GM12878 (cell line): ENCODE measurements at regions of chr6 and their contacts with region 1.

Region 1: DNA sequence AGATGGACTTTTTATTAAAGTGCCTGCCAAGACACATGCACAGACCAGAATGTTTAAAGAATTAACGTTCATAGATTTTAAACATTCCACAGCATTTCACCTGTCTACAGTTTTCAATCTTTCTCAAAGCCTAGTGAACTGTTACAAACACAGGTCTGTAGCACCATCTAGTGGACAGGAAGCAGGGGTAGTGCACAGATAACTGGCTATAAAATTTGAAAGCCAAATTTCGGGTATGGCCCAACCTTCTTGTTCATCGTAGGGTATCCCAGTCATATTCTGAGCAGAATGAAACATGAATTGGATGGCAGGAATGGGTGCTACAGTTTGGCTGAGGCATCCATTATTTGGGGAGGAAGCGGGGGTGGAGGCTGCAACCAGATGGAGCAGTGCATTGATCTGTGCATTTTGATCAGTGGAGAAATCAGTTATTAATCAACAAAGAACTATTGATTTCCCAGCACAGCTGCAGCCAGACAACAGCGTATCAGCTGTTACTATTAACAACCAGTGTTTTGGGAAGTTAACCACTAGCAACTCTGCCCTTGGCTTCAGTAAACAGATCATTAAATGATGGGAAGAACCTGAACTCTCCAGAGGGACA is 56.1 kb upstream of the B3GAT2 start:
- DNase-seq: peak; percentile 12
- ATAC-seq: peak; percentile 97
- H3K4me3 ChIP-seq: no peak overlapping the region
- H3K27ac ChIP-seq: no peak overlapping the region
- H3K4me1 ChIP-seq: no peaks in the 10 kb centered on the region
- H3K27me3 ChIP-seq: no peaks in the 10 kb centered on the region; a peak in 1 of 4 replicates
- CTCF ChIP-seq: peak; percentile 76 to 83 (median 80)
- EP300 ChIP-seq: no peak
- POLR2A ChIP-seq: no peak
- RAD21 ChIP-seq: peak; percentile 90

Region 2: GRCh38 chr6:70304616-70305015 is 708.4 kb before region 1 on chr6:
- CTCF ChIA-PET with region 1: interaction called, 50 read pairs
- POLR2A ChIA-PET with region 1: no interaction called
- RAD21 ChIA-PET with region 1: interaction called, 6 read pairs
- SMC1A ChIA-PET with region 1: interaction called, 12 read pairs
- in situ Hi-C with region 1: loop called (anchors 10 kb)
- intact Hi-C with region 1: loop called (anchors 1 kb)
- DNase-seq: no peak
- ATAC-seq: no peak
- H3K4me3 ChIP-seq: no peak overlapping the region
- H3K27ac ChIP-seq: no peak overlapping the region
- H3K4me1 ChIP-seq: no peaks in the 10 kb centered on the region
- H3K27me3 ChIP-seq: no peaks in the 10 kb centered on the region
- CTCF ChIP-seq: no peak
- EP300 ChIP-seq: no peak
- POLR2A ChIP-seq: no peak
- RAD21 ChIP-seq: no peak

Region 3: GRCh38 chr6:70901326-70901725 is 111.6 kb before region 1 on chr6:
- CTCF ChIA-PET with region 1: no interaction called
- POLR2A ChIA-PET with region 1: no interaction called
- RAD21 ChIA-PET with region 1: no interaction called
- SMC1A ChIA-PET with region 1: no interaction called
- in situ Hi-C with region 1: no loop called
- intact Hi-C with region 1: no loop called
- DNase-seq: no peak
- ATAC-seq: peak; percentile 32; the same call in 2 of the 3 replicates
- H3K4me3 ChIP-seq: no peak overlapping the region
- H3K27ac ChIP-seq: no peak overlapping the region
- H3K4me1 ChIP-seq: no peaks in the 10 kb centered on the region
- H3K27me3 ChIP-seq: no peaks in the 10 kb centered on the region
- CTCF ChIP-seq: peak in 2 of 3 experiments; percentile 15 to 32; a peak in 2 of 6 replicates
- EP300 ChIP-seq: no peak
- POLR2A ChIP-seq: no peak
- RAD21 ChIP-seq: no peak